ENCODE measurements at regions of chr1 and their contacts with region 1.

Region 1: GRCh38 chr1:214476958-214477870 is 74.2 kb downstream of the PTPN14 start:
- DNase-seq: no peak
- CTCF ChIP-seq: no peak

Region 2: GRCh38 chr1:214328770-214329469 is 148.3 kb before region 1 on chr1:
- CTCF ChIA-PET with region 1: no interaction called
- POLR2A ChIA-PET with region 1: no interaction called
- DNase-seq: peak; percentile 82
- CTCF ChIP-seq: peak; percentile 96

Region 3: DNA sequence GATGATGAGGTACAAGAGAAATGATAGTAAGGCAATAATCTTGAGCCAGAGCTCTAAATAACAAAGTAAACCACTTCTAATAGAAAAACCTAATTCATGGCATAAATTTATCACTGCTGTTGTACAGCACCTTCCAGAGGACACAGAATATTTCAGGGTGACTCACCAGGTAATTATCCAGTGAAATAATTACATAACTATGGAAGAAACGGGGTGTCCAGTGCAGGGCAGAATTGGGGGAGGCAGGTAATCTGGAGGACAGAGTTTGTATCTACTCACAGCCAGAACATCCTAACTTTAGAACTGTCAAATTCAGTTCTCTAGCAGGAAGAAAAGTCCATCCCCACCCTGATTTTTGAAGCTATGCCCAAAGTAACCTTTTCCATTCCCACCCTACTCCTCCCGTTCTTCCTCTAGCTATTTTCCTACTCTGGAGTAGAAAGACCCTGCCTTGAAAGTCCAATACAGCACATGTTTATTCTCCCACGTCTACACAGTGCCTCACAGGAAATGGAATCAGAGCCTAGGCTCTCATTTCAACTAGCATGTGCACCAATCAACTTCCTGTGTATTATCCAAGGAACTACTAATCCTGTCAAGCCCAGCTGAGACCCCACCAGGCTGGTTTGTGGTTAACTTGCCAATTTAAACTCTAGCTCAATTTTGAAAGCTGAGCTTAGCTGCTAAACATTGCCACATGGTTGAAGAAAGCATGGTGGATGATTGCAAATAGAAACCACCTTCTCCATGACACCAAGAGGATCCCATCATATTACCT is 22.4 kb before region 1 on chr1:
- CTCF ChIA-PET with region 1: interaction called, 10 read pairs
- POLR2A ChIA-PET with region 1: no interaction called
- DNase-seq: no peak
- CTCF ChIP-seq: no peak

Measured in GM10248 (cell line).